HCT116 (cell line): ENCODE measurements at regions of chr22 and their contacts with region 1.

Region 1: GRCh38 chr22:28051787-28052356 is 132.8 kb upstream of the PITPNB start:
- DNase-seq: peak; percentile 29
- ATAC-seq: peak; percentile 80
- H3K4me3 ChIP-seq: no peak overlapping the region
- H3K27ac ChIP-seq: no peak overlapping the region
- H3K4me1 ChIP-seq: no peaks in the 10 kb centered on the region
- H3K27me3 ChIP-seq: peaks cover 52% of the 10 kb centered on the region
- CTCF ChIP-seq: peak; percentile 34 to 86 (median 78); a peak in 5 of 6 replicates
- POLR2A ChIP-seq: no peak
- RAD21 ChIP-seq: peak; percentile 62

Region 2: GRCh38 chr22:27930331-27931060 is 121.4 kb before region 1 on chr22:
- CTCF ChIA-PET with region 1: no interaction called
- POLR2A ChIA-PET with region 1: no interaction called
- RAD21 ChIA-PET with region 1: no interaction called
- intact Hi-C with region 1: no loop called
- DNase-seq: no peak
- ATAC-seq: no peak
- H3K4me3 ChIP-seq: no peak overlapping the region
- H3K27ac ChIP-seq: no peak overlapping the region
- H3K4me1 ChIP-seq: no peaks in the 10 kb centered on the region
- H3K27me3 ChIP-seq: no peaks in the 10 kb centered on the region
- CTCF ChIP-seq: no peak
- POLR2A ChIP-seq: no peak
- RAD21 ChIP-seq: no peak

Region 3: DNA sequence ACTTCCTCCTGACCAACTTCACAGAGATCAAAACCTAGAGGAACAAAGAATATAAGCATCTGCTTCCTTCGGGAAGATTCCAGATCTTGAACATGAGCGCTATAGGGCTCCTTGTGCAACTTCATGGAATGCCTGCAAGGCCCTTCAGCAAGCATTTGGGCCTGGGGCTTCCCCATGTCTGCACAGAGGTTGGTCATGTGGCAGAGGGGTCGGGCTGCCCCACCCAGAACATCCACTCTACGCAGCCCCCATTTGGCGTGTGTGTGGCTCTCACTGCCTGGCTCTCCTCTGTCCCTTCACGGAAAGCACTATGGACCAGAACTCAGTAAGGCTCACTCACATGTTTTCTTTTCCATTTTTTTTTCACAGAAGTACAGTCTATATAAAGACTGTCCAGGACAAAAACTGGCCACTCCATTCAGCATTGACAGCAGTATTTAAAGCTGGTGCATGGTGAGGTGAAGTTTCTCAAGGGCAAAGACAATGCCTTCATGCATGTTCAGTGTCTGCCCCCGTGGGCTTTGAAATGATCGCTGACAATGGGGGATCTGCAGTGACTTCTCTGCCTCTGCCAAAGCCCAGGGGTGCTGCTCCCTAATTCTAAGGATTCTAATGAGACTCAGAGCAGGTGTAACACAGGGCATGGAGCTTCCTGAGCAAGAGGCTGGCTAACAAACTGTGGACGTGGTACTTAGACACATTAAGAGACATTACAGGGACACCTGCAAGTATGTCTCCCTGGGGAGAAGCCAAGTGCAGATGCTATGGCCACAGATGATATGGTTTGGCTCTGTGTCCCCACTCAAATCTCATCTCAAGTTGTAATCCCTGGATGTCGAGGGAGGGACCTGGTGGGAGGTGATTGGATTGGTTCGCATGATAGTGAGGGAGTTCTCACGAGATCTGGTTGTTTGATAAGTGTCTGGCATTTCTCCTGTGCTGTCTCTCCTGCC is 66.3 kb before region 1 on chr22:
- CTCF ChIA-PET with region 1: no interaction called
- POLR2A ChIA-PET with region 1: no interaction called
- RAD21 ChIA-PET with region 1: no interaction called
- intact Hi-C with region 1: no loop called
- DNase-seq: no peak
- ATAC-seq: no peak
- H3K4me3 ChIP-seq: no peak overlapping the region
- H3K27ac ChIP-seq: no peak overlapping the region
- H3K4me1 ChIP-seq: peaks cover under 1 to 4% of the 10 kb centered on the region in 2 experiments; a peak in 1 of 4 replicates
- H3K27me3 ChIP-seq: no peaks in the 10 kb centered on the region
- CTCF ChIP-seq: no peak
- POLR2A ChIP-seq: no peak
- RAD21 ChIP-seq: no peak

Region 4: GRCh38 chr22:27997538-27997937 is 54.3 kb before region 1 on chr22:
- CTCF ChIA-PET with region 1: no interaction called
- POLR2A ChIA-PET with region 1: no interaction called
- RAD21 ChIA-PET with region 1: no interaction called
- intact Hi-C with region 1: no loop called
- DNase-seq: no peak
- ATAC-seq: no peak
- H3K4me3 ChIP-seq: no peak overlapping the region
- H3K27ac ChIP-seq: no peak overlapping the region
- H3K4me1 ChIP-seq: no peaks in the 10 kb centered on the region
- H3K27me3 ChIP-seq: no peaks in the 10 kb centered on the region
- CTCF ChIP-seq: no peak
- POLR2A ChIP-seq: no peak
- RAD21 ChIP-seq: no peak

Region 5: DNA sequence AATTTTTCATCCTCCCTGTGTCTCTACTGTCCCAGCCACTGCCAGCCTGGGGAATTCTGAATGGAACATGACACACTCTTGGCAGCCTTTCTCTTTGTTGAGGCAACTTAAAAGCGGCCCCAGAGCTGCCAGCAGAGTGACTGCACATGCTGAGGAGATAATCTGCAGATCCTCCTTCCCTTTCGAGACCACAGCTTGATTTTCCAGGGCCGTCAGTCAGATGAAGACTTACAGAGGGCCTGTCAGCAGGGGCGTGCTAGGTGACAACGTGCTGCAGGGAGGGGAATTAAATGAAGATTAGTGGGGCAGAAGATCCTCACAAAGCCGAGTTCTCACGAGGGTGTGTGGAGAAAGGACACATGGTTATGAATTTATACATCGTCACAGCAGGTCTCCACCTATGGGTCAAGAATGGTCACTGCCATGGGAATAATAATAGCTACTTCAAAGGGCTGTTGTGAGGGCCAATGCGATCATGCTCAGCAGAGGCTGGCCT is 60.7 kb after region 1 on chr22:
- CTCF ChIA-PET with region 1: interaction called, 10 read pairs
- POLR2A ChIA-PET with region 1: no interaction called
- RAD21 ChIA-PET with region 1: no interaction called
- intact Hi-C with region 1: no loop called
- DNase-seq: peak; percentile 48
- ATAC-seq: peak; percentile 97
- H3K4me3 ChIP-seq: no peak overlapping the region
- H3K27ac ChIP-seq: no peak overlapping the region
- H3K4me1 ChIP-seq: peaks cover 5 to 6% of the 10 kb centered on the region in 2 experiments; a peak in 1 of 4 replicates
- H3K27me3 ChIP-seq: peaks cover 59% of the 10 kb centered on the region
- CTCF ChIP-seq: peak in 2 of 3 experiments; percentile 54 to 57; a peak in 4 of 6 replicates
- POLR2A ChIP-seq: no peak
- RAD21 ChIP-seq: no peak

Region 6: GRCh38 chr22:28442264-28442710 is 390.4 kb after region 1 on chr22:
- CTCF ChIA-PET with region 1: no interaction called
- POLR2A ChIA-PET with region 1: no interaction called
- RAD21 ChIA-PET with region 1: no interaction called
- intact Hi-C with region 1: loop called (anchors 5 kb)
- DNase-seq: peak; percentile 6
- ATAC-seq: peak; percentile 96
- H3K4me3 ChIP-seq: no peak overlapping the region
- H3K27ac ChIP-seq: no peak overlapping the region
- H3K4me1 ChIP-seq: no peaks in the 10 kb centered on the region
- H3K27me3 ChIP-seq: peaks cover 77% of the 10 kb centered on the region
- CTCF ChIP-seq: peak; percentile 21 to 62 (median 54); a peak in 4 of 6 replicates
- POLR2A ChIP-seq: no peak
- RAD21 ChIP-seq: peak; percentile 38

Region 7: DNA sequence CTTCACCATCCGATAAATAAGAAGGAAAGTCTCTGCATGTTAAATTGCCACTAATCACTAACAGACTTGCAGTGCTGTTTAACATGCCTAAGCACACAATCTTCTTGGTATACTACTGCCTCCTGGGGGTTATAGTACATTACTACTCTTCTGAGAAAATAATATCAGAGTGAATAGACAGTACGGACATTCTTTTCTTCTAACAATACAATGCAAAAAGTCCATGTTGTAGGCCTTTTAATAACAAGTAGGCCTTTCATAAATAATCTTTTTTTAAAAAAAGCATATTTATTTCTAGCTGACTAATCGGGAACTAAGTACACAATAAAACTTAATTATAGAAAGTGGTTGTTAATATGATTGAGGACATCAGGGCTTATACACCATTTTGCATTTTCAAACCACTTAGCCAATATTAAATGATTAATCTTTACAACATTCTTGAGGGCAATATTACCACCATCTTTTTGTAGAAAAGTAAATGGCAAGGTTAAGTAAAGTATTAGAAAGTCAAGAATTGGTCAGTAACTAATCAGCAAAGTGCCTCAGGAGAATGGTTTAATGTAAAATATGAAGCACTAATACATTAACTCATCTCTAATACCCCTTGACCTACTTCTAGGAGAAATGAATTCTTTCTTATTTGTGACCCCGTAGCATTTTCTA is 543.1 kb after region 1 on chr22:
- CTCF ChIA-PET with region 1: interaction called, 47 read pairs
- POLR2A ChIA-PET with region 1: no interaction called
- RAD21 ChIA-PET with region 1: interaction called in 1 of 2 experiments, 3 read pairs
- intact Hi-C with region 1: loop called (anchors 1 kb)
- DNase-seq: peak; percentile 35
- ATAC-seq: peak; percentile 94
- H3K4me3 ChIP-seq: no peak overlapping the region
- H3K27ac ChIP-seq: no peak overlapping the region
- H3K4me1 ChIP-seq: no peaks in the 10 kb centered on the region
- H3K27me3 ChIP-seq: no peaks in the 10 kb centered on the region
- CTCF ChIP-seq: peak; percentile 63 to 82 (median 66); a peak in 5 of 6 replicates
- POLR2A ChIP-seq: no peak
- RAD21 ChIP-seq: peak; percentile 71

Region 8: GRCh38 chr22:28829358-28830181 is 777.7 kb after region 1 on chr22:
- CTCF ChIA-PET with region 1: no interaction called
- POLR2A ChIA-PET with region 1: no interaction called
- RAD21 ChIA-PET with region 1: no interaction called
- intact Hi-C with region 1: loop called (anchors 10 kb)
- DNase-seq: peak; percentile 36
- ATAC-seq: peak; percentile 92
- H3K4me3 ChIP-seq: no peak overlapping the region
- H3K27ac ChIP-seq: no peak overlapping the region
- H3K4me1 ChIP-seq: no peaks in the 10 kb centered on the region
- H3K27me3 ChIP-seq: no peaks in the 10 kb centered on the region
- CTCF ChIP-seq: peak; percentile 70 to 99 (median 98)
- POLR2A ChIP-seq: no peak
- RAD21 ChIP-seq: peak; percentile 88